Activated B cell treated with CpG ODN at 0.5 μM for 24 hours (primary cell): ENCODE measurements at regions of chr10 and their contacts with region 1.

Region 1: DNA sequence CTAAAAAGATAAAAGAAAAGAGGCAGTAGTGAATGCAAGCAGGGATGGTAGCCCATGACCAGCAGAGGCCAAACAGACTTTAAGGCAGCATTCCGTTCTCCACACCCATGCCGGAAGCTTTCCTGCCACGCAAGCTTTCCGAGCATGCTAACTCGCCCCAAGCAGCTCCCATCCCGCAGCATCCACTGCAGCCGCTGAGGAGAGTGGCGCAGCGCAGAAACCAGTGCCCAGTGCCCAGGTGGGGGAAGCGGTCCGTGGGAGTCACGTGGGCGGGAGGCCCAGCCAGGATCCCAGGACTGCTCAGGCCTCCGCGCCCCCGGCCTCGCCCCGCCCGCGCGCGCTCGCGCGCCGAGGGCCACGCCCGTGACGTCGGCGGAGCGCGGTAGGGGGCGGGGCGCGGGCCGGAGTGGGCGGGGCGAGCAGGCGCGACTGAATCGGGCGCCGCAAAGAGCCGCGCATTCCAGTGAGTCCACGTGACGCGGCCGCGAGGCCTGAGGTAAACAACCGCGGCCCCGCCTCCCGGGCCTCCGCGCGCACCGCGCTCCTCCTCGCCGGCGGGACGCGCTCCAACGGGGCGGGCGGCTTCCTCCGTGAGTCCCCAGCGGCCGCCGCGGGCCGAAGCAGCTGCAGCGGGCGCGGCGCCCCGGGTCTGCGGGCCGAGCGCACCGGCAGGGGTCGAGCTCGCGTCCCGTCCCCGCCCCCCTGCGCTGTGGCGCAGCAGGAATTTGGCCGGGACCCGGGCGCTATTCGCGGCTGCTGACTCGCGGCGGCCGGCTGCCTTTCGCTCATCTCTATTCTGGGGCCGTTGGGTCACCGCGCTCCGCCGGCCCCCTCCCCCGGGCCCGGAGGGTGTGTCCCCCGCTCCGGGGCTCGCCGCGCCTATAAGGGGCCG is at the start of gene OTUD1:
- DNase-seq: peak; percentile 99
- ATAC-seq: peak; percentile 80
- H3K4me3 Mint-ChIP-seq: peak within 1 kb of the TSS; percentile 85
- H3K27ac Mint-ChIP-seq: peak within 1 kb of the TSS; percentile 91
- H3K4me1 Mint-ChIP-seq: peaks cover 44% of the 10 kb centered on the region
- H3K27me3 Mint-ChIP-seq: no peaks in the 10 kb centered on the region
- CTCF ChIP-seq: no peak
- total RNA-seq, gene OTUD1: 18.7 and 21.0 TPM in 2 replicates

Region 2: DNA sequence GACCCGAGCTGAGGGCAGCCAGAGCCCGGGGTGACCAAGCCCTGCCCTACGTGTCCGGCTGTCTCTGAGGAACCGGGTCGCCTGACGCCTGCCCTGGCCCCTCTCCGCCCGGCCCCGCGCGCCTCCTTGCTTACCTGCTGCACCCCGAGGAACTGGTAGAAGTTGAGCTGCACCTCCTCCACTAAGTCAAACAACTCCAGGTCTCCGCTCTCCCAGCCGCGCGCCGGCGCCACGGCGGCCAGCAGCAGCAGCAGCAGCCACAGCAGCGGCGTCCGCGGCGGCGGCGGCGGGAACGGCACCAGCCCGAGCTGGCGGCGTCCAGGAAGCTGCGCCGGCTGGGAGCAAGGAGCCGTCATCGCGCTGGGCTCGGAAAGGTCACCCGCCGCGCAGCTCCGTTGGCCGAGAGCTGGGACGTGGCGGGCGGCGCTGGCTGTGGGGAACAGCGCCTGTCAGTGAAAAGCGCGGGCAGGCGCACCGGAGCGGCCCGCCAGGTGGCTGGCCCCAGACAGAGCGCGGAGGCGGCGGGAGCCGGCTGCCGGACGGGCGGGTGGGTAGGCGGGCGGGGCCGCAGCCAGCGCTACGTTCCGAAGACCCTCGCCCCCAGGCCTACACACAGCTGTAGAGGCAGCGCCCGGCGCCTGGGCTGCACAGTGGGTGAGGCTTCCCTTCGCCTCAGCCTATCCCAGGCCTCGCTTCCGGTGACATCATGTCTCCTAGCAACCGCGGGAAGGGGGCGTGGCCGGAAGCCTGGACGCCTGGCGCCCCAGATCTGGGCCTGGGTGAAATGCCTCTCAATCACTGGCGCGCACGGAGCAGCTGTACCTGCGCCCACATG is 1435.5 kb before region 1 on chr10 and contains the start of gene DNAJC1:
- CTCF ChIA-PET with region 1: no interaction called
- POLR2A ChIA-PET with region 1: interaction called, 4 read pairs
- intact Hi-C with region 1: loop called (anchors 5 kb)
- DNase-seq: peak; percentile 98
- ATAC-seq: peak; percentile 92
- H3K4me3 Mint-ChIP-seq: peak within 1 kb of the TSS; percentile 87
- H3K27ac Mint-ChIP-seq: peak within 1 kb of the TSS; percentile 91
- H3K4me1 Mint-ChIP-seq: peaks cover 41% of the 10 kb centered on the region
- H3K27me3 Mint-ChIP-seq: no peaks in the 10 kb centered on the region
- CTCF ChIP-seq: no peak
- total RNA-seq, gene DNAJC1: 9.2 and 10.9 TPM in 2 replicates

Region 3: GRCh38 chr10:22325272-22326144 is 1113.3 kb before region 1 on chr10:
- CTCF ChIA-PET with region 1: no interaction called
- POLR2A ChIA-PET with region 1: no interaction called
- intact Hi-C with region 1: loop called (anchors 5 kb)
- DNase-seq: peak; percentile 67
- ATAC-seq: peak; percentile 33
- H3K4me3 Mint-ChIP-seq: peak overlapping the region; percentile 90
- H3K27ac Mint-ChIP-seq: peak overlapping the region; percentile 89
- H3K4me1 Mint-ChIP-seq: peaks cover 41% of the 10 kb centered on the region
- H3K27me3 Mint-ChIP-seq: no peaks in the 10 kb centered on the region
- CTCF ChIP-seq: no peak

Region 4: GRCh38 chr10:23192737-23193434 is 245.9 kb before region 1 on chr10:
- CTCF ChIA-PET with region 1: no interaction called
- POLR2A ChIA-PET with region 1: no interaction called
- intact Hi-C with region 1: no loop called
- DNase-seq: no peak
- ATAC-seq: no peak
- H3K4me3 Mint-ChIP-seq: no peak overlapping the region
- H3K27ac Mint-ChIP-seq: no peak overlapping the region
- H3K4me1 Mint-ChIP-seq: peaks cover 4% of the 10 kb centered on the region
- H3K27me3 Mint-ChIP-seq: peaks cover 58% of the 10 kb centered on the region
- CTCF ChIP-seq: no peak

Region 5: GRCh38 chr10:23362879-23363792 is 75.7 kb before region 1 on chr10:
- CTCF ChIA-PET with region 1: no interaction called
- POLR2A ChIA-PET with region 1: interaction called, 3 read pairs
- intact Hi-C with region 1: loop called (anchors 5 kb)
- DNase-seq: no peak
- ATAC-seq: no peak
- H3K4me3 Mint-ChIP-seq: peak overlapping the region; percentile 4
- H3K27ac Mint-ChIP-seq: no peak overlapping the region
- H3K4me1 Mint-ChIP-seq: peaks cover 33% of the 10 kb centered on the region
- H3K27me3 Mint-ChIP-seq: peaks cover 28% of the 10 kb centered on the region
- CTCF ChIP-seq: no peak

Region 6: DNA sequence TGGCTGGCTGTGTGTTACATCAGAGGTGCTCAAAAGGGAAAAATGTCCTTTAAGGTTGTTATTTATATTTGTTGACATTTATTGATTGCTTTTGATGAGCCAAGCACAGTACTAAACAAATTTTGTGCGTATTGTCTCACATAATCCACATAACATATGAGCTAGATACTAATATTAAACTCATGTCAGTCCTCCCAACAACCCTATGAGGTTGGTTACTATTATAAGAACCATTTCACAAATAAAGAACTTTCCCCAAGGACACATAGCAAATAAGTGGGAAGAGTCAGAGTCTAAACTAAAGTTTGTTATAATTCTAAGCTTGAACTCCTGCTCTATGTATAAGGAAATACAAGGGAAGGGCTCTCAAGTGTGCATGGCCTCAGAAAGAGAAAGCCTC is 35.5 kb before region 1 on chr10:
- CTCF ChIA-PET with region 1: no interaction called
- POLR2A ChIA-PET with region 1: no interaction called
- intact Hi-C with region 1: no loop called
- DNase-seq: no peak
- ATAC-seq: no peak
- H3K4me3 Mint-ChIP-seq: no peak overlapping the region
- H3K27ac Mint-ChIP-seq: no peak overlapping the region
- H3K4me1 Mint-ChIP-seq: no peaks in the 10 kb centered on the region
- H3K27me3 Mint-ChIP-seq: no peaks in the 10 kb centered on the region
- CTCF ChIP-seq: no peak

Region 7: DNA sequence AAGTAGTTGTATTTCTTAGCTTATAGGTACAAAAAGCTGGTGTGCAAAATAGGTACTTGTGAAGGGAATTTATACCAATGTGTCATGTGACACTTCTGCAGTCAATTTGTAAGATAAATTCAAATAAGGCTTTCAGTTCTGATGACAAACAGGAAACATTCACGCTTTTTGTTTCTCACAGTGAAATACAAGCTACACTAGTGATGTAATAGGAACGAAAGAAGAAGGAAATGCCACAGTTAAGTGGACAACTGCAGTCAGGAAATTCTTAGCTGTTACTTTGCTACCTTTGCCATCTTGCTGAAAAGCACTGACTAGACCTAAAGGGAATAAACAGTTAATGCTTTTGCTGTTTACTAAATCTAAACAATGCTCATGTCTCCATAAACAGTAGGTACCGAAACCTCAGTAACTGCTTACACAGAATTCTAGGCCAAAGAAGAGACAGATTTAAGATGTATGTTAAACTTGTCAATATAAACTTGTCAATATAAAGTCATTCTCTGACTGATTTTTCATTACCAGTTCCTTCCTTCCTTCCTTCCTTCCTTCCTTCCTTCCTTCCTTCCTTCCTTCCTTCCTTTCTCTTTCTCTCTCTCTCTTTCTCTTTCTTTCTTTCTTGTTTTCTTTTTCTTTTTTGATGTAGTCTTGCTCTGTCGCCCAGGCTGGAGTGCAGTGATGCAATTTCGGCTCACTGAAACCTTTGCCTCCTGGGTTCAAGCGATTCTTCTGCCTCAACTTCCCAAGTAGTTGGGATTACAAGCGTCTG is 10.2 kb after region 1 on chr10:
- CTCF ChIA-PET with region 1: interaction called, 3 read pairs
- POLR2A ChIA-PET with region 1: interaction called, 137 read pairs
- intact Hi-C with region 1: loop called (anchors 1 kb)
- DNase-seq: no peak
- ATAC-seq: peak; percentile 77
- H3K4me3 Mint-ChIP-seq: peak overlapping the region; percentile 77
- H3K27ac Mint-ChIP-seq: peak overlapping the region; percentile 93
- H3K4me1 Mint-ChIP-seq: peaks cover 78% of the 10 kb centered on the region
- H3K27me3 Mint-ChIP-seq: no peaks in the 10 kb centered on the region
- CTCF ChIP-seq: no peak

Region 8: DNA sequence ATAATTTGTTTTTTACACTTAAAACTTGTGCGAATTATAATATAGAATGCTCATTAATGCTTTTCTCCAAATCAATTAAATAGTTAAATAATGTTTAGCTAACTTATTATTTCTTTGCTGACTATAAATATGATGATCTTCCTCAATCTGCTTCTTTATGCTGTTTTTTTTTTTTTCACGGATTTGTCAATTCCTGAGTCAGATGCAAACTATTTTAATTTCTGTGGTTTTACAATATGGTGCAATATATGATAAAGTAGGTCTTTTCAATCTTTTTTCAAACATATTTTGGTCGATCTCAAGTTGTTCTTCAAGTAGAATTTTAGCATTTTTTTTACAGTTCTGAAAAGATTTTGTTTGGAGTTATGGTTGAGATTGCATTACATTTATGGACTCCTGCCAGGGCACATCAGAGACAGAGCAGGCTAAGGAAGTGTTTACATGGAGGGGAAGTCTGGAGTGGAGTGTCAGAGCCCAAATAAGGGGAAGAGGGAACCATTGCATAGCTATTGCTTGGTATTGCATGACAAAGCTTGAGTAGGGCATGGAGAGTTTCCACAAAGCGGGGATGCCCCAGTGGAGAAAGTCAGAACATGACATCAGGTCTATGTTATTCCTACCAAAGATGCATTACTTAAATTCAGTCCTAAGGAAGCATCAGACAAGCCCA is 204.4 kb after region 1 on chr10:
- CTCF ChIA-PET with region 1: no interaction called
- POLR2A ChIA-PET with region 1: no interaction called
- intact Hi-C with region 1: no loop called
- DNase-seq: no peak
- ATAC-seq: no peak
- H3K4me3 Mint-ChIP-seq: no peak overlapping the region
- H3K27ac Mint-ChIP-seq: no peak overlapping the region
- H3K4me1 Mint-ChIP-seq: no peaks in the 10 kb centered on the region
- H3K27me3 Mint-ChIP-seq: no peaks in the 10 kb centered on the region
- CTCF ChIP-seq: no peak

Region 9: DNA sequence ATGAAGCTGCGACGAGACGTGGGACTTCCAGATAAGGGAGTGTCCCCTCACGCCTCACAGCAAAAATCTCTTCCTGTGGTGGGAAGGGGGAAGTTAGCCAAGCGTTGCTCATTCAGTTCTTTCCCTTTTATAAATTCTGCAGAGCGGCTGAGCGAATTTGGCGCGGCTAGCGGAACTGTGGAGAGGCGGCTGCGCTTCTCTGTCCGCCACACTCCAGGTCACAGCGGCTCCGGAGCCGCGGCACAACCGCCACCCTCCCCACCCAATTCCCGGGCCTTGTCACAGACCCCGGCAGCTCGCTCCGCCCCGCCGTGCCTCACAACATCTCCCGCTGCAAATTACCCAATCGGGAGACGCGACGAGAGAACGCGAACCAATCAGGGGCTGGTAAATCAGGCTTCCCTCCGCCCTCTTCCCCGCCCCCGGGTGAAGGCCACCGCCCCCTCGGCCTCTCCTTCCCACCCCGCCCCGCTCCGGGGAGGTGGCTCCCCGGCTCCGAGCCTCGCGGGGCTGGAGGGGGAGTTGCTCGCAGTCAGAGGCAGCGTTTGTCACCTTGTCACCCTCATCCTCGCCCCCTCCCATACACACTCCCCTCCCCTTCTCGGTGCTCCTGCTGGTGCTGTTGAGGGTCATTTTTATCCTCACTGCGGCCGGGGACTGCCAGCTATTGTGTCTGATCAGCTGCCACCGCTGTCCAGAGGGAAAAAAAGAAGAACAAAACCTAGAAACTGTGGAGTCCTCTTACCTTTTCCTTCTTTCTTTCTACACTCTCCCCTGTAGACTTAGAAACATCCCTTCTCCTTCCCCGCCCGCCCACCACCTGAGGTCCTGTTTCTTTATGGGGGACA is 1285.8 kb after region 1 on chr10:
- CTCF ChIA-PET with region 1: no interaction called
- POLR2A ChIA-PET with region 1: no interaction called
- intact Hi-C with region 1: loop called (anchors 5 kb)
- DNase-seq: peak; percentile 88
- ATAC-seq: peak; percentile 88
- H3K4me3 Mint-ChIP-seq: peak overlapping the region; percentile 91
- H3K27ac Mint-ChIP-seq: peak overlapping the region; percentile 87
- H3K4me1 Mint-ChIP-seq: peaks cover 28% of the 10 kb centered on the region
- H3K27me3 Mint-ChIP-seq: peaks cover 3% of the 10 kb centered on the region
- CTCF ChIP-seq: no peak

Region 10: GRCh38 chr10:25016376-25017154 is 1577.8 kb after region 1 on chr10 and contains the start of gene THNSL1:
- CTCF ChIA-PET with region 1: no interaction called
- POLR2A ChIA-PET with region 1: no interaction called
- intact Hi-C with region 1: loop called (anchors 2 kb)
- DNase-seq: peak; percentile 85
- ATAC-seq: peak; percentile 95
- H3K4me3 Mint-ChIP-seq: peak within 1 kb of the TSS; percentile 88
- H3K27ac Mint-ChIP-seq: peak within 1 kb of the TSS; percentile 93
- H3K4me1 Mint-ChIP-seq: peaks cover 27% of the 10 kb centered on the region
- H3K27me3 Mint-ChIP-seq: no peaks in the 10 kb centered on the region
- CTCF ChIP-seq: no peak
- total RNA-seq, gene THNSL1: 3.8 TPM in 2 replicates